ENCODE measurements at regions of chr7 and their contacts with region 1.

Region 1: GRCh38 chr7:64581926-64582894 is 19.3 kb upstream of the ZNF680 start:
- DNase-seq: peak in 3 of 4 experiments; percentile 20 to 60 (median 21)
- ATAC-seq: peak; percentile 87
- H3K4me3 ChIP-seq: no peak overlapping the region
- H3K27ac ChIP-seq: peak overlapping the region; percentile 57; the same call in 1 of the 3 replicates
- H3K4me1 ChIP-seq: peaks cover 4 to 5% of the 10 kb centered on the region in 2 experiments; a peak in 2 of 5 replicates
- H3K27me3 ChIP-seq: no peaks in the 10 kb centered on the region
- CTCF ChIP-seq: no peak
- EP300 ChIP-seq: peak; percentile 22; the same call in 1 of the 2 replicates
- POLR2A ChIP-seq: no peak
- RAD21 ChIP-seq: no peak

Region 2: DNA sequence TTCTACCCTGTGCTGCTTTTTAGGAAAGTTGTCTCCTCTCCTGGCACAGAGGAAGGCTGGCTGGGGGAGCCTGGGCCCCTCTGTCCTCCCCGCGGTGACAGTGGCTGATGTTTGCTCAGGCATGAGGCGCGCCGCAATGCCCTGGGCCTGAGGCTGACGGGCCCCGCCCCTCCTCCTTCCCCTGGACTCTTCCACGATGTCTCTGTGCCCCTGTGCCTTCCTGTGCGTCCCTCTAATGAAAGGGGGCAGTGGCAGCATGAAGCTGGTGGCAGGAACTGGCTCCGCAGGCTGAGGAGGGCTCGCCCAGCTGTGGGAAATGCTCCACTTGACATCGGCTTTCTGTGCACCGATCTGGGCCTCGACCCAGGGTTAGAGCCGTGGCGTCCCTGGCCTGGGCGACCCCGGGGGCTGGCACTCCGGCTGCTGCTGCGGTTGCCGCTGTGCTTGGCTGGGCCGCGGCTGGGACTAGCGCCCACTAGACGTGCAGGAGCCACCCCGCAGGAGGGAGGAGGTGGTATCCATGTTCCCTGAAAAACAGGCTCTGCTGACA is 87.2 kb before region 1 on chr7:
- CTCF ChIA-PET with region 1: no interaction called
- POLR2A ChIA-PET with region 1: no interaction called
- in situ Hi-C with region 1: no loop called
- intact Hi-C with region 1: loop called (anchors 5 kb)
- DNase-seq: no peak
- ATAC-seq: peak; percentile 23; the same call in 1 of the 3 replicates
- H3K4me3 ChIP-seq: no peak overlapping the region
- H3K27ac ChIP-seq: no peak overlapping the region
- H3K4me1 ChIP-seq: peaks cover 0 to 6% of the 10 kb centered on the region in 2 experiments; a peak in 2 of 5 replicates
- H3K27me3 ChIP-seq: no peaks in the 10 kb centered on the region
- CTCF ChIP-seq: no peak
- EP300 ChIP-seq: no peak
- POLR2A ChIP-seq: no peak
- RAD21 ChIP-seq: no peak